ENCODE measurements at regions of chr19 and their contacts with region 1.

Region 1: DNA sequence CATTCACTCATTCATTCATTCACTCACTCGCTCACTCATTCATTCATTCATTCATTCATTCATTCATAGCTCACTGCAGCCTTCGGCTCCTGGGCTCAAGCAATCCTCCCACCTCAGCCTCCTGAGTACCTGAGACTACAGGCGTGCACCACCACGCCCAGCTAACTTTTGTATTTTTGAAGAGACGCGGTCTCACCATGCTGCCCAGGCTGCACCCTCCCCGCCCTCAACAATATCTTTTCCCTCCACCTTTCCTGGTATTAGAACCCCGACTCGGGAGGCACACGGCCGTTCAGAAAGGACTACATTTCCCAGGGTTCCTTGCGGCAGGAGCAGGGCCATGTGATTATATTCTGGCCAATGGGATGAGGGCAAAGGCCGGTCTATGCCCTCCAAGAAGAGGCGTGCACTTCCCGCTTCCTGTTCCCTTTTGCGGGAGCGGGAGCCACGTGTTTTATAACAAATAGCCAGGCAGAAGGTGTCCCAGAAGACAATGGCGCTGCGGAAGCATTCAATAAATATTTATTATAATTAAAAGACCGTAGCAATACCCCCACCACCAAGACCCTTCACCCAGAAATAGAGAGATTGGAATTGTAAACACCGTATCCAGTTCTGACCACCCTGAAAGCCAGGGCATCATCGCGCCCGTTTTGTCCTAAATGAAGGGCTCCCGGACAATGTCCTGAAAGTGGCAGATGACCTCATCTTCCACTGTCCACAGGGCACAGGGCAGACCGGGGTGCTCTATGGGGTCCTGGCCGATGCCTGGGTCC is 15.9 kb downstream of the TICAM1 start:
- DNase-seq: peak; percentile 93 to 94
- ATAC-seq: peak; percentile 78
- H3K4me3 ChIP-seq: peak overlapping the region; percentile 33 to 48 (median 36)
- H3K27ac ChIP-seq: peak overlapping the region; percentile 95 to 97 (median 96)
- H3K4me1 ChIP-seq: peaks cover 38 to 41% of the 10 kb centered on the region in 2 donors
- H3K27me3 ChIP-seq: no peaks in the 10 kb centered on the region
- CTCF ChIP-seq: no peak
- POLR2A ChIP-seq: peak in 1 of 2 donors; percentile 19

Region 2: GRCh38 chr19:4723367-4724187 is 92.0 kb before region 1 on chr19 and contains the start of gene DPP9:
- in situ Hi-C with region 1: no loop called
- intact Hi-C with region 1: no loop called
- DNase-seq: peak; percentile 97 to 99
- ATAC-seq: peak; percentile 92 to 94
- H3K4me3 ChIP-seq: peak within 1 kb of the TSS; percentile 76 to 100 (median 94)
- H3K27ac ChIP-seq: peak within 1 kb of the TSS; percentile 79 to 99 (median 96)
- H3K4me1 ChIP-seq: peaks cover 12 to 18% of the 10 kb centered on the region in 2 donors
- H3K27me3 ChIP-seq: no peaks in the 10 kb centered on the region
- CTCF ChIP-seq: peak in 4 of 5 experiments; percentile 18 to 68 (median 38)
- POLR2A ChIP-seq: peak; percentile 93 to 97
- total RNA-seq, gene DPP9: 92.6 to 208 (median 148) TPM

Region 3: GRCh38 chr19:4791170-4792018 is 24.2 kb before region 1 on chr19 and contains the start of gene FEM1A:
- in situ Hi-C with region 1: no loop called
- intact Hi-C with region 1: loop called (anchors 1 kb)
- DNase-seq: peak; percentile 100
- ATAC-seq: peak; percentile 93
- H3K4me3 ChIP-seq: peak within 1 kb of the TSS; percentile 68 to 100 (median 92)
- H3K27ac ChIP-seq: peak within 1 kb of the TSS; percentile 91 to 100 (median 94)
- H3K4me1 ChIP-seq: peaks cover 40 to 46% of the 10 kb centered on the region in 2 donors
- H3K27me3 ChIP-seq: no peaks in the 10 kb centered on the region
- CTCF ChIP-seq: peak; percentile 97 to 98 (median 98)
- POLR2A ChIP-seq: peak; percentile 78 to 84
- total RNA-seq, gene FEM1A: 246 to 360 (median 300) TPM

Region 4: GRCh38 chr19:4831304-4831978 is 15.8 kb after region 1 on chr19 and contains the start of gene TICAM1:
- in situ Hi-C with region 1: no loop called
- intact Hi-C with region 1: loop called (anchors 1 kb)
- DNase-seq: peak; percentile 44 to 70
- ATAC-seq: peak; percentile 86 to 90
- H3K4me3 ChIP-seq: peak within 1 kb of the TSS; percentile 83 to 95 (median 92)
- H3K27ac ChIP-seq: peak within 1 kb of the TSS; percentile 89 to 95 (median 92)
- H3K4me1 ChIP-seq: peaks cover 12 to 20% of the 10 kb centered on the region in 2 donors
- H3K27me3 ChIP-seq: no peaks in the 10 kb centered on the region
- CTCF ChIP-seq: peak in 4 of 5 experiments; percentile 10 to 35 (median 20)
- POLR2A ChIP-seq: peak; percentile 82 to 83
- total RNA-seq, gene TICAM1: 5.9 to 14.0 (median 9.0) TPM

Region 5: DNA sequence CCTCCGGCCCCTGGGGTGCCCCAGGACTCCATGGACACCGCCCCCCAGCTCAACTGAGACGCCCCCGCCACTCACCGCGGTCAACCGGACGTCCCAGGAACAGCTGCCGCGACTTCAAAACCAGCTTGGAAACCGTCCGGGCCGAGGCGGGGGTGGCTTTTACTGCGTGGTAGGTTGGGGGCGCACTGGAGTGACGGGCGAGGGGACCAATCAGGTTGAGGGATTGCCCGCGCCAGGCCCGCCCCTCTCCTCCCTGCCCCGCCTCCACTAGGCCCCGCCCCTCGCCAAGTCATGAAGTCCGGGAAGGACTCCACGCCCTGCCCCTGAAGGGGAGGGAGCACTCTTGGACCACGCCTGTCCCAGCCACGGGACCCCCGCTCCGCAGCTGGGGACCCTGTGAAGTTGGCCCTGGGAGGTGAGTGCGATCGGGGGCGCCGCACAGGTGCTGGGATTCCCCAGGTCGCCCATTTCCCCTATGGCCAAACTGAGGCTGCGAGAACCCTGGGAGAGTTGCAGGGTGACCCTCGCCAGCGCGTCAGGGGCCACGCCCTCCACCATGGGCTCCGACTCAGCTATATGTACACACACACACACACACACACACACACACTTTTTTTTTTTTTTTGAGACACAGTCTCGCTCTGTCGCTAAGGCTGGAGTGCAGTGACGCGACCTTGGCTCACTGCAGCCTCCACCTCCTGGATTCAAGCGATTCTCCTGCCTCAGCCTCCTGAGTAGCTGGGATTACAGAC is 52.1 kb after region 1 on chr19 and contains the start of gene PLIN3:
- in situ Hi-C with region 1: no loop called
- intact Hi-C with region 1: loop called (anchors 5 kb)
- DNase-seq: peak; percentile 95 to 96
- ATAC-seq: peak; percentile 87 to 88
- H3K4me3 ChIP-seq: peak within 1 kb of the TSS; percentile 68 to 87 (median 82)
- H3K27ac ChIP-seq: peak within 1 kb of the TSS; percentile 87 to 93 (median 91)
- H3K4me1 ChIP-seq: peaks cover 5 to 14% of the 10 kb centered on the region in 2 donors
- H3K27me3 ChIP-seq: no peaks in the 10 kb centered on the region
- CTCF ChIP-seq: no peak
- POLR2A ChIP-seq: peak; percentile 73 to 76
- total RNA-seq, gene PLIN3: 53.9 to 193 (median 92.5) TPM

Region 6: GRCh38 chr19:4909897-4910593 is 94.4 kb after region 1 on chr19:
- in situ Hi-C with region 1: loop called in 1 of 4 experiments (anchors 5 kb)
- intact Hi-C with region 1: no loop called
- DNase-seq: peak; percentile 88 to 90
- ATAC-seq: peak; percentile 90
- H3K4me3 ChIP-seq: peak overlapping the region; percentile 60 to 80 (median 66)
- H3K27ac ChIP-seq: peak overlapping the region; percentile 26 to 68 (median 63)
- H3K4me1 ChIP-seq: peaks cover 18 to 20% of the 10 kb centered on the region in 2 donors
- H3K27me3 ChIP-seq: no peaks in the 10 kb centered on the region
- CTCF ChIP-seq: no peak
- POLR2A ChIP-seq: no peak

Region 7: GRCh38 chr19:4976401-4977298 is 161.0 kb after region 1 on chr19:
- in situ Hi-C with region 1: no loop called
- intact Hi-C with region 1: loop called (anchors 5 kb)
- DNase-seq: peak; percentile 92 to 94
- ATAC-seq: peak; percentile 82 to 86
- H3K4me3 ChIP-seq: peak overlapping the region; percentile 26 to 40 (median 38)
- H3K27ac ChIP-seq: peak overlapping the region; percentile 85 to 96 (median 93)
- H3K4me1 ChIP-seq: peaks cover 80 to 82% of the 10 kb centered on the region in 2 donors
- H3K27me3 ChIP-seq: no peaks in the 10 kb centered on the region
- CTCF ChIP-seq: peak in 4 of 5 experiments; percentile 28 to 54 (median 38)
- POLR2A ChIP-seq: peak; percentile 64 to 79

Measured in gastrocnemius medialis (tissue), 4 donors.